ENCODE measurements at regions of chr10 and their contacts with region 1.

Region 1: GRCh38 chr10:102420810-102421644 is at the start of gene FBXL15:
- DNase-seq: peak; percentile 68
- H3K4me3 ChIP-seq: peak within 1 kb of the TSS; percentile 82
- H3K27me3 ChIP-seq: peaks cover 4% of the 10 kb centered on the region
- CTCF ChIP-seq: no peak
- polyA plus RNA-seq, gene FBXL15: 3.5 and 7.5 TPM in 2 replicates

Region 2: GRCh38 chr10:102167861-102168260 is 253.2 kb before region 1 on chr10:
- CTCF ChIA-PET with region 1: interaction called, 25 read pairs
- POLR2A ChIA-PET with region 1: no interaction called
- DNase-seq: no peak
- H3K4me3 ChIP-seq: no peak overlapping the region
- H3K27me3 ChIP-seq: no peaks in the 10 kb centered on the region
- CTCF ChIP-seq: no peak

Region 3: DNA sequence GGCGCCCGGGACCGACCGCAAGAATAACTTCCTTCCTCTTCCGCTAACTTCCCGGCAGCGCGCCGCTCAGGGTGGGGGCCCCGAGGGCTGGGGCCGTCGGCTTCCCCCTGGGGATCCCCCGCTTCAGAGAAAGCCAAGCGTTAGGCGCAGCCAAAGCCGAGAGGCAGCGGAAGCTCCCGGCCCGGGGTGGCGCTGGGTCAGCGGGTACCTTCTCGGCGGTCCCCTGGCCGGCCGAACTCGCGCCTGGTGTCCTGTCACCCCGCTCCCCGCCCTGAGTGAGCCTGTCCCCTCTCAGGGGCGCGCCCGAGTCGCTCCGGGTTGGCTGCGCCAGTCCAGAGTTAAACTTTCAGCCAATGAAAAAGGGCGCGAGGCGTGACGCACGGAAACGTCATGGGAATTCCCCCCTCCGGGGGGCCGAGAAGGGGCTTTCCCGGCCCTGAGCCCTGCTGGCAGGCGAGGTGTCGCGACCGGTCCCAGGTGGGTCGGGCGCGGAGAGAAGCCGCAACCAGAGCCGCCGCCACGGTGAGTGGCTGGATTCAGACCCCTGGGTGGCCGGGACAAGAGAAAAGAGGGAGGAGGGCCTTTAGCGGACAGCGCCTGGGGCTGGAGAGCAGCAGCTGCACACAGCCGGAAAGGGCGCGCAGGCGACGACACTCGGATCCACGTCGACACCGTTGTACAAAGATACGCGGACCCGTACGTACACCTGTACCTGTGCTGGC is 26.8 kb before region 1 on chr10:
- CTCF ChIA-PET with region 1: interaction called, 41 read pairs
- POLR2A ChIA-PET with region 1: interaction called, 3 read pairs
- DNase-seq: peak; percentile 51
- H3K4me3 ChIP-seq: peak overlapping the region; percentile 79
- H3K27me3 ChIP-seq: no peaks in the 10 kb centered on the region
- CTCF ChIP-seq: no peak; the same call in 1 of the 2 replicates

Region 4: GRCh38 chr10:102399217-102400089 is 21.6 kb before region 1 on chr10:
- CTCF ChIA-PET with region 1: interaction called, 41 read pairs
- POLR2A ChIA-PET with region 1: interaction called, 3 read pairs
- DNase-seq: no peak
- H3K4me3 ChIP-seq: peak overlapping the region; percentile 48
- H3K27me3 ChIP-seq: no peaks in the 10 kb centered on the region
- CTCF ChIP-seq: peak; percentile 86

Region 5: DNA sequence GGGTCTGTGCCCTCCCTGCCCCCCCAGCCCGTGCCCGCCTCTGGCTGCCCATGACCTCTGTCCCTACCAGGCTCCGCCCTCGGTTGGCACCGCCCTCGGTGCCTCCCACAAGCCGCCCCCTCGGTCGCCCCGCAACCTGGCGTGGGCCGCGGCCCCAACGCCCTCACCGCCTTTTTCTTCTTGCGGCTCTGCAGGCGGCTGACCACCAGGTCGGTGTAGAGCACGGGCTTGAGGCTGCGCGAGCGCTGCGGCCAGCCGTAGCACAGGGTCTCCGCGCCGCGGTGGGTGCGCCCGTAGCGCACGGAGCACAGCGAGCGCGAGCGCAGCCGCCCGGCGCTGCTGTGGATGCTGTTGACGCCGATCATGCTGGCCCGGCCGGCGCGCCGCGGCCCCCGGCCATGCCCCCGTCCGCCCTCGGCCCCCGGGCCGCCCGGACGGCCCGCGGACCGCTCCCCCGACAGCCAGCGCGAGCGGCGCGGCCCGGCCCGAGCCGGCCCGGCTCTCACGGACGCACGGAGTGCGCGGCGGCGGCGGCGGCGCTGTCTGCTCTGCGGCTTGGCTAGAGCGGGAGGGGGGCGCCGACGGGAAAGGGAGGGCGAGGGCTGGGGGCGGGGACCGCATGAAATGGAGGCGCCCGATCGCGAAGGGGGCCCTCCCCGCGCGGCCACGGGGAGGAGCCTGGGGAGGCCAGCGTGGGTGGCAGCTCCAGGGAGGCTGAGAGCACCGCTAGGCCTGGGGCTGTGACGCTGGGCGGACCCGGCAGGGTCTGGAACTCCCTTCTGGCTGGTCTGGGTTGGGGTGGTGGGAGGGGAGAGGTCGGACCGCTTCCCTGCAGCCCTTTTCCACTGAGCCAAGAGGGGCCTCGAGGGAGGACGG is 12.1 kb before region 1 on chr10:
- CTCF ChIA-PET with region 1: interaction called, 30 read pairs
- POLR2A ChIA-PET with region 1: no interaction called
- DNase-seq: no peak
- H3K4me3 ChIP-seq: peak overlapping the region; percentile 21
- H3K27me3 ChIP-seq: peaks cover 48% of the 10 kb centered on the region
- CTCF ChIP-seq: no peak

Region 6: DNA sequence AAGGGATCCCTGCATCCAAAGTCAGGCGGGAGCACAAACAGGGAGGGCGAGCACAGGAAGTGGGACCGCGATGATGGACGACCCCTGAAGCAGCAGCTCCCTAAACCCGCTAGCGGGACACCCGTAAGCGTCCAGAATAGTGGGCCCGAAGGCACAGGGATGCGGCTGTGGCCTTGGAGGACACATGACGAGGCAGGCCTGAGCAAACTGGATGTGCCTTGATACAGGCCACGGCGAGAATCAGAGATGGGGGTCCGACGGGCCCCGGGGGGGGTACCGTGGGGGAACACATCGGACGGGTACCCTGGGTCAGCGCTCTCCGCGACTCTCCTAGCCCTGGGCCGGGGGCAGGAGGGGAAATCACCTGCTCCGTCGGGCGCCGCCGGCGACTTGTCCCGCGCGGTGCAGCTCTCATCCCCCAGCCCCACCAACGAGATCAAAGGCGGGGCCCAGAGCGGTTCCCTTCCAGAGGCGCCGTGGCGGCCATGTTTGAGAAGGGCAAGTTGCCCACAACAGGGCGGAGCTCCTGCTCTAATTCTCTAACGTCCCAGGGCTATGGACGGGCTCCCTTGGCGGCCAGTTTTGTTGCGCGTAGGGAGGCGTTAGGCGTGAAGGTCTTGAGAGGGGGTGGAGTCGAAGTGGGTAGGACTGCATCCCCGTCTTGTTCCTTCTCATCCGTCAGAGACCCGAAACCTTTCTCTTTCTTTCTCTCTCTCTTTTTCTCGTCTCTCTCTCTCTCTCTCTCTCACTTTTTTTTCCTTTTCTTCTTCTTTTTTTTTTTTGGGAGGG is 11.3 kb after region 1 on chr10 and contains the start of gene CUEDC2:
- CTCF ChIA-PET with region 1: interaction called, 30 read pairs
- POLR2A ChIA-PET with region 1: interaction called, 7 read pairs
- DNase-seq: peak; percentile 59
- H3K4me3 ChIP-seq: peak within 1 kb of the TSS; percentile 83
- H3K27me3 ChIP-seq: no peaks in the 10 kb centered on the region; the same call in 1 of the 2 replicates
- CTCF ChIP-seq: 0 out of 2 replicates have a peak, but pooled peaks have one; percentile 2
- polyA plus RNA-seq, gene CUEDC2: 51.2 and 74.4 TPM in 2 replicates